Breast epithelium (tissue), 4 donors: ENCODE measurements at regions of chr4 and their contacts with region 1.

Region 1: GRCh38 chr4:120940547-120940946 is 18.0 kb upstream of the PRDM5 start:
- DNase-seq: no peak
- H3K4me3 ChIP-seq: no peak overlapping the region
- H3K27ac ChIP-seq: no peak overlapping the region
- H3K4me1 ChIP-seq: no peaks in the 10 kb centered on the region
- H3K27me3 ChIP-seq: no peaks in the 10 kb centered on the region
- CTCF ChIP-seq: no peak
- POLR2A ChIP-seq: no peak

Region 2: DNA sequence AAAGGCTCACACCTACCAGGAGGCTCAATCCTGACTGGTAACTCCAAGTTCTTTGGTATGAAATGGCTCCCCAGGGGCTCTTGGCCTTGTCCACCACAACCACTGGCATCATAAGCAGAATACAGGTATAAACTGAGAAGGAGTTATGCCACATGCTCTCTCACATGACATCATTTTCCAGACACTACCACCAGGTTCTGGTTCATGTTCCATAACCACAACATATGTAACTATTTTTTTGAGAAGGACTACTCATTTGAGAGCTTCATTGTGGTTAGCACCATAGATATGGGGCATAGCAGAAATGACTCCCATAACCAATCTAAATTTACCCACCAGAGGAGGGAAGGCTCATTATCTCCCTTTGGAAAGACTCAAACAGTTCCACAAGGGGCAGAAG is 37.6 kb before region 1 on chr4:
- intact Hi-C with region 1: no loop called
- DNase-seq: no peak
- H3K4me3 ChIP-seq: no peak overlapping the region
- H3K27ac ChIP-seq: no peak overlapping the region
- H3K4me1 ChIP-seq: no peaks in the 10 kb centered on the region
- H3K27me3 ChIP-seq: no peaks in the 10 kb centered on the region
- CTCF ChIP-seq: no peak
- POLR2A ChIP-seq: no peak

Region 3: GRCh38 chr4:121041307-121042090 is 101.0 kb after region 1 on chr4:
- intact Hi-C with region 1: loop called (anchors 5 kb)
- DNase-seq: no peak
- H3K4me3 ChIP-seq: no peak overlapping the region
- H3K27ac ChIP-seq: no peak overlapping the region
- H3K4me1 ChIP-seq: no peaks in the 10 kb centered on the region
- H3K27me3 ChIP-seq: no peaks in the 10 kb centered on the region
- CTCF ChIP-seq: no peak
- POLR2A ChIP-seq: no peak